ENCODE measurements at regions of chr16 and their contacts with region 1.

Region 1: GRCh38 chr16:67672739-67673662 is 6.4 kb downstream of the C16orf86 start:
- DNase-seq: peak; percentile 77 to 83 (median 80)
- ATAC-seq: peak; percentile 82
- H3K4me3 ChIP-seq: no peak overlapping the region
- H3K27ac ChIP-seq: no peak overlapping the region
- H3K4me1 ChIP-seq: peaks cover 0 to 10% of the 10 kb centered on the region in 2 experiments; a peak in 3 of 5 replicates
- H3K27me3 ChIP-seq: no peaks in the 10 kb centered on the region
- CTCF ChIP-seq: peak; percentile 83 to 94 (median 93)
- EP300 ChIP-seq: no peak
- POLR2A ChIP-seq: no peak
- RAD21 ChIP-seq: peak; percentile 87 to 90

Region 2: DNA sequence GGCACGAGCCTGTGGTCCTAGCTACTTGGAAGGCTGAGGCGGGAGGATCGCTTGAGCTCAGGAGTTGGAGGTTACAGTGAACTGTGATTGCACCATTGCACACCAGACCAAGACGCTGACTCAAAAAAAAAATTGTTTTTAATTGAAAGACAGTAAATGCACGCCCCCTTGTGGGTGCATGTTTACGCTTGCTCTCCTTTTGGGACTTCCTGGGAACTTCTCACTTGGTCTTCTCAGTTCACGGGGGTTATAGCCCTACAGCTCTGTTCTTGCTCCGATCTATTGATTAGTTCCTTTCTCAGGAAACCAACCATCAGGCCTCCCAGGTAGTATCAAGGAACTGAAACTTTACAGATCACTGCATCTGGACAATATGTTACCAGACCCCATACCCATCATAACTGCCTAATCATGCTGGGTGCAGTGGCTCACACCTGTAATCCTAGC is 158.6 kb before region 1 on chr16:
- CTCF ChIA-PET with region 1: no interaction called
- POLR2A ChIA-PET with region 1: no interaction called
- in situ Hi-C with region 1: no loop called
- intact Hi-C with region 1: no loop called
- DNase-seq: peak; percentile 57 to 92 (median 63)
- ATAC-seq: peak; percentile 88
- H3K4me3 ChIP-seq: no peak overlapping the region
- H3K27ac ChIP-seq: no peak overlapping the region; the same call in 2 of the 3 replicates
- H3K4me1 ChIP-seq: peaks cover 2 to 3% of the 10 kb centered on the region in 2 experiments; a peak in 3 of 5 replicates
- H3K27me3 ChIP-seq: no peaks in the 10 kb centered on the region
- CTCF ChIP-seq: peak; percentile 76 to 91 (median 79)
- EP300 ChIP-seq: no peak
- POLR2A ChIP-seq: no peak
- RAD21 ChIP-seq: peak; percentile 87 to 94

Region 3: DNA sequence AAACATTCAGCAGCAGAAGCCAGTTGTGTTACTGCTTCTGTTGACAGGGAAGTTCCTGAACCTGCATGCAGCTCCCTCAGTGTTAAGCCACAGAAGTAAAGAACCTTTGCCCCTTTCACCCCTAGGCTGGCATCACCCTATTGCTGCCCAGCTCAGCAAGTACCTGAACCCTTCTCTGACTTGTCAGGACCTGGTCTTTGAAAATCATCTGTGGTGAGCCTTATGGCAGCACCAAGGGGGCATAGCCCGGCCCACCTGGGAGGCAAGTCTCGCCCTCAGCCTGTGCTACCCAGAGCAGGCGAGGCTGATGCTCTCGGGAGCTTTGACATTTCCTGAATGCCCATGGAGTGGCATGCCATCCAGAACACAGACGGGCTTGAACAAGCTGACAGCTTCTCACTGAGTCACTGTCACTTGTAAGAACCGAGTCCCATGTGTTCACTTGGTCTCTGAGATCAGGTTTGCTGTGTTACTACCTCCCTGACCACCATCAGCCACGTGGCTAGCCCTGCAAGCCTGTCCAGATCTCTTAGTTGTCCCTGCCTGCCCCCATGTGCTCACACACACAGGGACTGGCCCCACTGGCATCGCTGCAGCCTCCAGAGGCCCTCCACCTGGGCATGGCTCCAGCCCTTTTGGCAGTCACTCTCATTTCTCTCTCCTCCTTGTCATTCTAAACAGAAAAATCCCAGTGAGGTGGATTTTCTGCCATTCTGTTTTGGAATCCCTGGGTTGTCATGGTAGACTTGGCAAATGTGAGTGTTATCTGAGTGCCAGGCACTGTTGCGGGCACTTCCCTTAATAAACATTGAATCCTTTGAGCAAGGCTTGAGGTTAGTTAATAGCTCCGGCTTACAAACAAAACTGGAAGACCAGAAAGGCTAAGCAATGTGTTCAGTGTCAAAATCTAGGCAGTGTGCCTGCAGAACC is 31.0 kb before region 1 on chr16:
- CTCF ChIA-PET with region 1: no interaction called
- POLR2A ChIA-PET with region 1: no interaction called
- in situ Hi-C with region 1: no loop called
- intact Hi-C with region 1: no loop called
- DNase-seq: no peak
- ATAC-seq: no peak; the same call in 2 of the 3 replicates
- H3K4me3 ChIP-seq: no peak overlapping the region
- H3K27ac ChIP-seq: no peak overlapping the region
- H3K4me1 ChIP-seq: peaks cover 0 to 26% of the 10 kb centered on the region in 2 experiments; a peak in 2 of 5 replicates
- H3K27me3 ChIP-seq: peaks cover 0 to 5% of the 10 kb centered on the region in 2 experiments; a peak in 1 of 5 replicates
- CTCF ChIP-seq: 0 out of 6 replicates have a peak, but pooled peaks of 1 of the 3 experiments have one; percentile 12
- EP300 ChIP-seq: no peak
- POLR2A ChIP-seq: no peak
- RAD21 ChIP-seq: 0 out of 4 replicates have a peak, but pooled peaks of 1 of the 2 experiments have one; percentile 6

Region 4: GRCh38 chr16:67806428-67807147 is 133.6 kb after region 1 on chr16 and contains the starts of genes RANBP10 and TSNAXIP1:
- CTCF ChIA-PET with region 1: no interaction called
- POLR2A ChIA-PET with region 1: no interaction called
- in situ Hi-C with region 1: no loop called
- intact Hi-C with region 1: loop called (anchors 5 kb)
- DNase-seq: peak; percentile 94 to 99 (median 96)
- ATAC-seq: peak; percentile 99
- H3K4me3 ChIP-seq: peak within 1 kb of the TSS; percentile 98
- H3K27ac ChIP-seq: peak within 1 kb of the TSS; percentile 86
- H3K4me1 ChIP-seq: peaks cover 15 to 18% of the 10 kb centered on the region in 2 experiments; a peak in 4 of 5 replicates
- H3K27me3 ChIP-seq: no peaks in the 10 kb centered on the region
- CTCF ChIP-seq: no peak
- EP300 ChIP-seq: no peak
- POLR2A ChIP-seq: peak; percentile 87
- RAD21 ChIP-seq: no peak; a peak in 1 of 4 replicates
- polyA plus RNA-seq, gene RANBP10: 0.61 to 1.4 TPM
- polyA plus RNA-seq, gene TSNAXIP1: 0.03 TPM in 1 of 2 experiments, not detected in the other

Region 5: GRCh38 chr16:67919622-67920221 is 246.7 kb after region 1 on chr16:
- CTCF ChIA-PET with region 1: interaction called, 10 read pairs
- POLR2A ChIA-PET with region 1: no interaction called
- in situ Hi-C with region 1: no loop called
- intact Hi-C with region 1: no loop called
- DNase-seq: peak in 1 of 4 experiments; percentile 41
- ATAC-seq: peak; percentile 71
- H3K4me3 ChIP-seq: no peak overlapping the region
- H3K27ac ChIP-seq: no peak overlapping the region
- H3K4me1 ChIP-seq: peaks cover 22 to 28% of the 10 kb centered on the region in 2 experiments
- H3K27me3 ChIP-seq: no peaks in the 10 kb centered on the region
- CTCF ChIP-seq: peak; percentile 49 to 69 (median 60)
- EP300 ChIP-seq: no peak
- POLR2A ChIP-seq: no peak
- RAD21 ChIP-seq: peak in 1 of 2 experiments; percentile 58; a peak in 2 of 4 replicates